Esophagus muscularis mucosa (tissue), 4 donors: ENCODE measurements at regions of chr4 and their contacts with region 1.

Region 1: DNA sequence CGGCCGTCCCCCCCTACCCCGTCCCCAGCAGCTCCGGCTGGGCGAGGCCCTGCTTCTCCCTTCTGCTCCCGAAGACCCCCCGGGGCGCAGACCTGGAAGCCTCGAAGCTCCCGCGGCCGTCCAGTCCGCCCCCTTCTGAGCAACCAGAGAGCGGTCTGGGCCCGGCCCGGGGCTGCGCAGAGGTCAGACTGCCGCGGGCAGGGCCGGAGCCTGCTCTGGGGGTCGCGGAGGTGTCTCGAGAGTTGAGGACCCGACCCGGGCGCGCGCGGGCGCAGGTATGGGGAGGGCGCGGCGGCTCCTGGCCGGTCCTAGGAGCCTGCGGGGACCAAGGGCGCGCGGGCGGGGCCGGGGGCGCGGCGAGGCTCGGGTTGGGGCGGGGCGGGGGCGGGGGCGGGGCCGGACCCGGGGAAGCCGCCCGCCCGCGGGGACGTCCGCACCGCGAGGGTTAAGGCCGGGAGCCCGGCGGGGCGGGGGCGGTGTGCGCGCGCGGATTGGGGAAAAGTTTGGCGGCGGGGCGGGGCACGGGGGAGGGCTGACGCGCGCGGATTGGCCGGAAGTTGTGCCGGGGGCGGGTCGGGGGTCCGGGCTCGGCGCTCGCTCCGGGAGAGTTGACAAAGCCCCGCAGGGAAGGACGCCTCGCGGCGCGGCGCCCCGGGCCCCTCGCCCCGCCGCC is at the start of gene FGFRL1:
- DNase-seq: peak; percentile 97
- H3K4me3 ChIP-seq: peak within 1 kb of the TSS; percentile 66 to 78 (median 74)
- H3K27ac ChIP-seq: peak within 1 kb of the TSS; percentile 73 to 85 (median 82)
- H3K4me1 ChIP-seq: peaks cover 26 to 60% (median 48%) of the 10 kb centered on the region in 4 donors
- H3K27me3 ChIP-seq: peaks cover 0 to 26% (median 4%) of the 10 kb centered on the region in 4 donors
- CTCF ChIP-seq: no peak
- EP300 ChIP-seq: no peak
- POLR2A ChIP-seq: no peak
- total RNA-seq, gene FGFRL1: 22.0 to 54.2 (median 32.5) TPM

Region 2: GRCh38 chr4:1047121-1047985 is 36.2 kb after region 1 on chr4:
- intact Hi-C with region 1: loop called (anchors 5 kb)
- DNase-seq: no peak
- H3K4me3 ChIP-seq: peak overlapping the region; percentile 24 to 44 (median 31)
- H3K27ac ChIP-seq: peak overlapping the region in 3 of 4 donors; percentile 19 to 34 (median 33)
- H3K4me1 ChIP-seq: peaks cover 19 to 52% (median 39%) of the 10 kb centered on the region in 4 donors
- H3K27me3 ChIP-seq: peaks cover 0 to 83% (median 32%) of the 10 kb centered on the region in 4 donors
- CTCF ChIP-seq: no peak
- EP300 ChIP-seq: no peak
- POLR2A ChIP-seq: no peak